ENCODE measurements at regions of chr14 and their contacts with region 1.

Region 1: DNA sequence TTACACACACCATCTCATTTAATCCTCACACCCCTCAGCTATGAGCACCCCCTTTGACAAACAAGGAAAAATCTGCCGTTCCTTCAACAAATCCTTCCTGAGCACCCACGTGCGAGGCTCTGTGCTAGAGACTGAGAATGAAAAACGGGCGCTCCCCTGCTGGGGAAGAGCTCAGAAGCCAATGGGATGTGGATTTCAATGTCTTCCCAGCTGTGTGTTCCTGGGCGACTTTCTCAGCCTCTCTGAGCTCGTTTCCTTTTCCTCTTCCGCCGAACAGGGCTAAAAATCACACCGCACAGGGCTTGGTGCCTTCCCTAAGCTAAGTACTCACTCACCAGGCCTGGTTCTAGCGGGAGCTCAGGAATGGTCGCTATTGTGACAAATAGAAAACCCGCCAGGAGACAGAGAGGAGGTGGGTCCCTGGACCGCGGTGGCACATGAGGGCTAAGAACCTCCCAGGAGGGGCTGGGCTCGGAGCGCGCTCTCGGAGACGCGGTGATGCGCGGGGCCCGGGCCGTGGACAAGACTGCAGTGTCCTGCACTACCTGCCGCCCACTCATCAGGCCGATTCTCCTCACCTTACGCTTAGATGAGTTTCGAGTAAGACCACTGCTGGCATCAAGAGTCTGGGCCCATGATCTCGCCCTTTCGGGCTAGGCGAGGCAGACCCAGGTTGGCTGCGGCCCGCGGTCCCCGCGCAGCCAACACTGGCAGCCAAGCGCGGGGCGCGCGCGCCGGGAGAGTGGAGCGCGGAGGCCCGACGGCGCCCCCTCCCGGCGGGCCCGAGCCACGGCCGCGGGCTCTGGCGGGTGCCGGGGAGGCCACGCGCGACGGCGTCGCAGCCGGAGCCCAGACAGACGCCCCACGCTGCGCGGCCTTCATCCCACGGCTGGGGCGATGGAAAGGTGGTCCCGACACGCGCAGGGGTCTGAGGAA is 17.0 kb downstream of the ZDHHC22 start:
- DNase-seq: peak; percentile 69
- H3K4me3 Mint-ChIP-seq: peak overlapping the region; percentile 77
- H3K27ac Mint-ChIP-seq: peak overlapping the region; percentile 42
- H3K4me1 Mint-ChIP-seq: peaks cover 36% of the 10 kb centered on the region
- H3K27me3 Mint-ChIP-seq: peaks cover 16% of the 10 kb centered on the region

Region 2: DNA sequence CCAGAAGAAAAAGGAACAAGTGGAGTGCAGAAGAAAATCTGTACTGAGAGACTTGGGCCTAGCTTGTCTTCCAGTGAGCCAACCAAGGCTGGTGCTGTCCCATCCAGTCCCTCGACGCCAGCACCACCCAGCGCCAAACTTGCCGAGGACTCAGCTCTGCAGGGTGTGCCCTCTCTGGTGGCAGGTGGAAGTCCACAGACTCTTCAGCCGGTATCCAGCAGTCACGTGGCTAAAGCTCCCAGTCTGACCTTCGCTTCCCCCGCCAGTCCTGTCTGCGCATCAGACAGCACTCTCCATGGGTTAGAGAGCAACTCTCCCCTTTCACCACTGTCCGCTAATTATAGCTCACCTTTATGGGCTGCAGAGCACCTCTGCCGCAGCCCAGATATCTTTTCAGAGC is 11.0 kb before region 1 on chr14:
- CTCF ChIA-PET with region 1: interaction called, 14 read pairs
- intact Hi-C with region 1: no loop called
- DNase-seq: no peak
- H3K4me3 Mint-ChIP-seq: no peak overlapping the region
- H3K27ac Mint-ChIP-seq: no peak overlapping the region
- H3K4me1 Mint-ChIP-seq: no peaks in the 10 kb centered on the region
- H3K27me3 Mint-ChIP-seq: no peaks in the 10 kb centered on the region

Region 3: DNA sequence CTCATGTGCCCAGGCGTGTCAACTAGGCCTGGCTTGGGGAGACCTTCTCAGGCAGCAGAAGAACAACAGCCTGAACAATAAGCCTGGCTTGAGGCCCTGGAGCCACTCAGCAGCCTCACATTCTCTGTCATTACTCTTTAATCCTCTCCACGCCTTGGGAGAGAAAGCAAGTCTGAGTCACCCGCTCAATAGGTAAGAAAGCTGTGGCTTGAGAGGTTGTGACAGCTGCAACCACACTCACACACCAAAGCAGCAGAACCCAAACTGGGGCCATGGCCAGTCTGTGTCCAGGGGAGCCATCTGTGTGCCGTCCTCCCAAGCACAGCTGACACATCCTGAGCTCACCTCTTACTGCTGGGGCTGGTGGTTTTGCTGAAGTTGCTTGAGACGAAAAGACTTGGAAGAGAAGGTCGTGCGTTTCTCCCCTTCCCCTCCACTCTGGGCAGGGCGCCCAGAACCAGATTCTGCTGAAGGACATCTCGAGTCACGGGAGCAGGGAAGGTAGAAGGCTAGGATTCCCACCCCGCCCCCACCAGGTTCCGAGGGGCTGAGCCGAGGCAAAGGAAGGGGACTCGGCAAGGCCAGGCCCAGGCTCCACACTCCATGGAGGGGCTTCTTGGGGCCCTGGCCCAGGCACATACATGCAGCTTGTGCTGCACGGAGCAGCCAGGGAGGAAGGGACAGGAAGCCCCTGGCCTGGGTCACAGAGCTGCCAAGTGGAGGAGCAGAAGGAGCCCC is 62.5 kb after region 1 on chr14:
- CTCF ChIA-PET with region 1: no interaction called
- intact Hi-C with region 1: no loop called
- DNase-seq: no peak
- H3K4me3 Mint-ChIP-seq: no peak overlapping the region
- H3K27ac Mint-ChIP-seq: no peak overlapping the region
- H3K4me1 Mint-ChIP-seq: peaks cover 7% of the 10 kb centered on the region
- H3K27me3 Mint-ChIP-seq: peaks cover 10% of the 10 kb centered on the region